ENCODE measurements at regions of chr3 and their contacts with region 1.

Region 1: GRCh38 chr3:125165189-125165947 is 47.2 kb downstream of the SLC12A8 start:
- DNase-seq: no peak
- H3K4me3 ChIP-seq: no peak overlapping the region
- H3K27ac ChIP-seq: peak overlapping the region in 3 of 4 donors; percentile 56 to 63 (median 59)
- H3K4me1 ChIP-seq: peaks cover 3 to 28% (median 13%) of the 10 kb centered on the region in 4 donors
- H3K27me3 ChIP-seq: no peaks in the 10 kb centered on the region
- CTCF ChIP-seq: peak in 4 of 5 experiments; percentile 33 to 45 (median 40)
- EP300 ChIP-seq: no peak
- POLR2A ChIP-seq: no peak

Region 2: DNA sequence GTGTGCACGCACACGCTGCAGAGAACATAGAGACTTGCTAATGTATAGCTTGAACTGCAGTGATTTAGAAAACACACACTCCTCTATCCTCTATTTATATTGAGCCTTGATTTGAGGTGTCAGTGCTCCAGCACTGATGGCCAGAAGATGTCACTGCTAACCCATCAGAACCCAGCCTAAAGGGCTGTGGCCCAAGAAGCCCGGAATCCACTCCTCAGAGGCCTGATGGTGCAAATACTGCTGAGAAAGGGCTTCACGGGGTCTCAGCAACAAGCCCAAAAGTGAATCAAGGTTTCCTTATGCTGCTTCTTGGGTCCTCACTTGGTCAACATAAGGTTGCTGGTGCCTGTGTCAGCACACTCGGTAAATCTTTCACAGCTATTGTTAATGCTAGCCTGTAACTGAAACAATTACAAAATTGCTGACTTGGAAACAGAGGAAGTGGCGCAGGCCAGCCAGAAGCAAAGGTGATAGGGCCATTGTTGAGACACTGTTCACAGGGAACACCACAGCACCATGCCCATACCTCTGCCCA is 169.8 kb before region 1 on chr3:
- in situ Hi-C with region 1: no loop called
- intact Hi-C with region 1: loop called (anchors 10 kb)
- DNase-seq: peak; percentile 65
- H3K4me3 ChIP-seq: no peak overlapping the region
- H3K27ac ChIP-seq: peak overlapping the region; percentile 8 to 54 (median 32)
- H3K4me1 ChIP-seq: peaks cover 0 to 35% (median 8%) of the 10 kb centered on the region in 4 donors
- H3K27me3 ChIP-seq: no peaks in the 10 kb centered on the region
- CTCF ChIP-seq: peak; percentile 66 to 77 (median 67)
- EP300 ChIP-seq: no peak
- POLR2A ChIP-seq: no peak

Measured in transverse colon (tissue), 4 donors.